CD8-positive, alpha-beta T cell (primary cell): ENCODE measurements at regions of chr12 and their contacts with region 1.

Region 1: GRCh38 chr12:49130151-49131050 is 794 bp downstream of the TUBA1B start:
- DNase-seq: peak; percentile 78 to 97 (median 92)
- ATAC-seq: peak; percentile 67
- H3K4me3 ChIP-seq: peak overlapping the region; percentile 88 to 91
- H3K4me3 Mint-ChIP-seq: peak overlapping the region; percentile 96
- H3K27ac ChIP-seq: peak overlapping the region; percentile 90 to 96
- H3K27ac Mint-ChIP-seq: peak overlapping the region; percentile 99
- H3K4me1 ChIP-seq: peaks cover 25% of the 10 kb centered on the region
- H3K4me1 Mint-ChIP-seq: peaks cover 47% of the 10 kb centered on the region
- H3K27me3 ChIP-seq: no peaks in the 10 kb centered on the region
- H3K27me3 Mint-ChIP-seq: no peaks in the 10 kb centered on the region
- CTCF ChIP-seq: peak; percentile 96

Region 2: GRCh38 chr12:49069507-49070346 is 60.7 kb before region 1 on chr12 and contains the start of gene RHEBL1:
- CTCF ChIA-PET with region 1: interaction called, 17 read pairs
- POLR2A ChIA-PET with region 1: interaction called, 8 read pairs
- intact Hi-C with region 1: loop called (anchors 1 kb)
- DNase-seq: peak; percentile 96 to 99 (median 98)
- ATAC-seq: peak; percentile 99
- H3K4me3 ChIP-seq: peak within 1 kb of the TSS; percentile 79 to 90
- H3K4me3 Mint-ChIP-seq: peak within 1 kb of the TSS; percentile 96
- H3K27ac ChIP-seq: peak within 1 kb of the TSS; percentile 64 to 81
- H3K27ac Mint-ChIP-seq: peak within 1 kb of the TSS; percentile 89
- H3K4me1 ChIP-seq: peaks cover 9% of the 10 kb centered on the region
- H3K4me1 Mint-ChIP-seq: peaks cover 18% of the 10 kb centered on the region
- H3K27me3 ChIP-seq: no peaks in the 10 kb centered on the region
- H3K27me3 Mint-ChIP-seq: no peaks in the 10 kb centered on the region
- CTCF ChIP-seq: no peak
- total RNA-seq, gene RHEBL1: 4.7 to 5.6 TPM

Region 3: GRCh38 chr12:49098035-49098451 is 32.4 kb before region 1 on chr12:
- CTCF ChIA-PET with region 1: interaction called, 31 read pairs
- POLR2A ChIA-PET with region 1: interaction called, 9 read pairs
- intact Hi-C with region 1: no loop called
- DNase-seq: peak; percentile 43 to 75 (median 65)
- ATAC-seq: peak; percentile 82
- H3K4me3 ChIP-seq: no peak overlapping the region
- H3K4me3 Mint-ChIP-seq: no peak overlapping the region
- H3K27ac ChIP-seq: no peak overlapping the region
- H3K27ac Mint-ChIP-seq: no peak overlapping the region
- H3K4me1 ChIP-seq: peaks cover 14% of the 10 kb centered on the region
- H3K4me1 Mint-ChIP-seq: peaks cover 15% of the 10 kb centered on the region
- H3K27me3 ChIP-seq: peaks cover 13 to 16% of the 10 kb centered on the region in 2 experiments
- H3K27me3 Mint-ChIP-seq: peaks cover 21% of the 10 kb centered on the region
- CTCF ChIP-seq: peak; percentile 83

Region 4: DNA sequence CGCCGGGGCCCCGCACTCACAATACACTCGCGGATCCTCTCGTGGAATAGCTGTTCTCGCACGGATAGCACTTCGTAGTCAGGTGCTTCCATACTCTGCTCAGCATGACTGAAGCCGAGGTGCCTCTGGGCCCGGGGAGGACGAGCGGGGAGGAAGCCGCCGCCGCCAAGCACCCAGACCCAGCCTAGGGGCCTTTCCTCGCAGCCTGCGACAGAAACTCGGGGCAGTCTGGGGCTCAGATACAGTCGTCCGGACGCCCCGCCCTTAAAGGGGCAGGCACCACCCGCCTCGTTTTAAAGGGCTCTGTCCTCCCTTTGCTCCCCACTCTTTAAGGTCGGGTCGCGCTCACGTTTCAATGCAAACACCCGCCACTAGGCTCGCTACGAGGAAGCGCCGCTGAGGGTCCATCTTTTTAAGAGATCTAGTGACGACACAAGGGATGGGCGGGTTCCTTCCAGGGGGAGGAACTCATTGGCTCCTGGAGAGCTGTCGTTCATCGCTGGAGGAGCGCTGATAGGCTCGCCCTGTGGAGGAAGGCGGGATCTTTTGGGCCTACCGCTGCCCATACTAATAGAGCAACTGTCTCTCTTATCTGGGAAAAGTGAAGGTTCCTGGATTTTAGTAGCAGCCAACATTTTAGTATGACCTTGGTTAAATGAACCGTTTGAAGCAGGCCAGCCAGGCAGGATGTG is 19.8 kb before region 1 on chr12 and contains the start of gene LMBR1L:
- CTCF ChIA-PET with region 1: interaction called, 30 read pairs
- POLR2A ChIA-PET with region 1: interaction called, 102 read pairs
- intact Hi-C with region 1: loop called (anchors 1 kb)
- DNase-seq: peak; percentile 93 to 99 (median 96)
- ATAC-seq: peak; percentile 90
- H3K4me3 ChIP-seq: peak within 1 kb of the TSS; percentile 82 to 92
- H3K4me3 Mint-ChIP-seq: peak within 1 kb of the TSS; percentile 98
- H3K27ac ChIP-seq: peak within 1 kb of the TSS; percentile 92 to 97
- H3K27ac Mint-ChIP-seq: peak within 1 kb of the TSS; percentile 98
- H3K4me1 ChIP-seq: peaks cover 18% of the 10 kb centered on the region
- H3K4me1 Mint-ChIP-seq: peaks cover 44% of the 10 kb centered on the region
- H3K27me3 ChIP-seq: no peaks in the 10 kb centered on the region
- H3K27me3 Mint-ChIP-seq: no peaks in the 10 kb centered on the region
- CTCF ChIP-seq: peak; percentile 53
- total RNA-seq, gene LMBR1L: 464 to 497 TPM

Region 5: GRCh38 chr12:49188914-49189367 is 58.5 kb after region 1 on chr12 and contains the start of gene TUBA1A:
- CTCF ChIA-PET with region 1: interaction called, 29 read pairs
- POLR2A ChIA-PET with region 1: interaction called, 117 read pairs
- intact Hi-C with region 1: loop called (anchors 1 kb)
- DNase-seq: peak; percentile 90 to 99 (median 96)
- ATAC-seq: peak; percentile 85
- H3K4me3 ChIP-seq: peak within 1 kb of the TSS; percentile 90 to 98
- H3K4me3 Mint-ChIP-seq: peak within 1 kb of the TSS; percentile 97
- H3K27ac ChIP-seq: peak within 1 kb of the TSS; percentile 100
- H3K27ac Mint-ChIP-seq: peak within 1 kb of the TSS; percentile 100
- H3K4me1 ChIP-seq: peaks cover 14% of the 10 kb centered on the region
- H3K4me1 Mint-ChIP-seq: peaks cover 14% of the 10 kb centered on the region
- H3K27me3 ChIP-seq: no peaks in the 10 kb centered on the region
- H3K27me3 Mint-ChIP-seq: no peaks in the 10 kb centered on the region
- CTCF ChIP-seq: no peak
- total RNA-seq, gene TUBA1A: 209 to 225 TPM

Region 6: GRCh38 chr12:49232940-49233841 is 102.8 kb after region 1 on chr12:
- CTCF ChIA-PET with region 1: interaction called, 9 read pairs
- POLR2A ChIA-PET with region 1: interaction called, 5 read pairs
- intact Hi-C with region 1: loop called (anchors 1 kb)
- DNase-seq: peak in 1 of 9 experiments; percentile 13
- ATAC-seq: no peak
- H3K4me3 ChIP-seq: no peak overlapping the region
- H3K4me3 Mint-ChIP-seq: peak overlapping the region; percentile 69
- H3K27ac ChIP-seq: no peak overlapping the region
- H3K27ac Mint-ChIP-seq: no peak overlapping the region
- H3K4me1 ChIP-seq: peaks cover 8% of the 10 kb centered on the region
- H3K4me1 Mint-ChIP-seq: peaks cover 10% of the 10 kb centered on the region
- H3K27me3 ChIP-seq: no peaks in the 10 kb centered on the region
- H3K27me3 Mint-ChIP-seq: no peaks in the 10 kb centered on the region
- CTCF ChIP-seq: no peak

Region 7: GRCh38 chr12:49322708-49323523 is 192.5 kb after region 1 on chr12 and contains the start of gene TROAP:
- CTCF ChIA-PET with region 1: no interaction called
- POLR2A ChIA-PET with region 1: no interaction called
- intact Hi-C with region 1: loop called in 1 of 2 experiments (anchors 5 kb)
- DNase-seq: peak; percentile 93 to 99 (median 96)
- ATAC-seq: peak; percentile 96
- H3K4me3 ChIP-seq: peak within 1 kb of the TSS; percentile 71 to 83
- H3K4me3 Mint-ChIP-seq: peak within 1 kb of the TSS; percentile 89
- H3K27ac ChIP-seq: peak within 1 kb of the TSS; percentile 48 to 60
- H3K27ac Mint-ChIP-seq: peak within 1 kb of the TSS; percentile 81
- H3K4me1 ChIP-seq: peaks cover 12% of the 10 kb centered on the region
- H3K4me1 Mint-ChIP-seq: peaks cover 20% of the 10 kb centered on the region
- H3K27me3 ChIP-seq: no peaks in the 10 kb centered on the region
- H3K27me3 Mint-ChIP-seq: no peaks in the 10 kb centered on the region
- CTCF ChIP-seq: no peak
- total RNA-seq, gene TROAP: 0.49 to 0.72 TPM

Region 8: GRCh38 chr12:49720214-49720613 is 589.8 kb after region 1 on chr12:
- CTCF ChIA-PET with region 1: no interaction called
- POLR2A ChIA-PET with region 1: no interaction called
- intact Hi-C with region 1: no loop called
- DNase-seq: peak in 1 of 9 experiments; percentile 34
- ATAC-seq: no peak
- H3K4me3 ChIP-seq: no peak overlapping the region
- H3K4me3 Mint-ChIP-seq: no peak overlapping the region
- H3K27ac ChIP-seq: no peak overlapping the region
- H3K27ac Mint-ChIP-seq: no peak overlapping the region
- H3K4me1 ChIP-seq: no peaks in the 10 kb centered on the region
- H3K4me1 Mint-ChIP-seq: no peaks in the 10 kb centered on the region
- H3K27me3 ChIP-seq: peaks cover 0 to 2% of the 10 kb centered on the region in 2 experiments
- H3K27me3 Mint-ChIP-seq: peaks cover 12% of the 10 kb centered on the region
- CTCF ChIP-seq: no peak